ENCODE measurements at regions of chr1 and their contacts with region 1.

Region 1: GRCh38 chr1:84433258-84434080 is 35.2 kb downstream of the DNASE2B start:
- DNase-seq: peak; percentile 81

Region 2: GRCh38 chr1:84620720-84621313 is 187.3 kb after region 1 on chr1:
- in situ Hi-C with region 1: loop called (anchors 25 kb)
- DNase-seq: peak; percentile 72

Measured in SK-MEL-5 (cell line).